Activated CD4-positive, alpha-beta memory T cell treated with anti-CD3 and anti-CD28 coated beads for 36 hours (primary cell): ENCODE measurements at regions of chr6 and their contacts with region 1.

Region 1: GRCh38 chr6:39228992-39229767 is at the start of gene KCNK5:
- DNase-seq: peak; percentile 93
- H3K4me3 Mint-ChIP-seq: peak within 1 kb of the TSS; percentile 78
- H3K27ac Mint-ChIP-seq: peak within 1 kb of the TSS; percentile 88
- H3K4me1 Mint-ChIP-seq: peaks cover 39% of the 10 kb centered on the region
- H3K27me3 Mint-ChIP-seq: no peaks in the 10 kb centered on the region
- total RNA-seq, gene KCNK5: 16.2 to 16.5 TPM

Region 2: GRCh38 chr6:37499433-37500293 is 1729.5 kb before region 1 on chr6 and contains the start of gene CCDC167:
- CTCF ChIA-PET with region 1: no interaction called
- POLR2A ChIA-PET with region 1: no interaction called
- intact Hi-C with region 1: loop called (anchors 5 kb)
- DNase-seq: peak; percentile 99
- H3K4me3 Mint-ChIP-seq: peak within 1 kb of the TSS; percentile 92
- H3K27ac Mint-ChIP-seq: peak within 1 kb of the TSS; percentile 95
- H3K4me1 Mint-ChIP-seq: peaks cover 86% of the 10 kb centered on the region
- H3K27me3 Mint-ChIP-seq: no peaks in the 10 kb centered on the region
- total RNA-seq, gene CCDC167: 60.4 to 65.2 TPM

Region 3: DNA sequence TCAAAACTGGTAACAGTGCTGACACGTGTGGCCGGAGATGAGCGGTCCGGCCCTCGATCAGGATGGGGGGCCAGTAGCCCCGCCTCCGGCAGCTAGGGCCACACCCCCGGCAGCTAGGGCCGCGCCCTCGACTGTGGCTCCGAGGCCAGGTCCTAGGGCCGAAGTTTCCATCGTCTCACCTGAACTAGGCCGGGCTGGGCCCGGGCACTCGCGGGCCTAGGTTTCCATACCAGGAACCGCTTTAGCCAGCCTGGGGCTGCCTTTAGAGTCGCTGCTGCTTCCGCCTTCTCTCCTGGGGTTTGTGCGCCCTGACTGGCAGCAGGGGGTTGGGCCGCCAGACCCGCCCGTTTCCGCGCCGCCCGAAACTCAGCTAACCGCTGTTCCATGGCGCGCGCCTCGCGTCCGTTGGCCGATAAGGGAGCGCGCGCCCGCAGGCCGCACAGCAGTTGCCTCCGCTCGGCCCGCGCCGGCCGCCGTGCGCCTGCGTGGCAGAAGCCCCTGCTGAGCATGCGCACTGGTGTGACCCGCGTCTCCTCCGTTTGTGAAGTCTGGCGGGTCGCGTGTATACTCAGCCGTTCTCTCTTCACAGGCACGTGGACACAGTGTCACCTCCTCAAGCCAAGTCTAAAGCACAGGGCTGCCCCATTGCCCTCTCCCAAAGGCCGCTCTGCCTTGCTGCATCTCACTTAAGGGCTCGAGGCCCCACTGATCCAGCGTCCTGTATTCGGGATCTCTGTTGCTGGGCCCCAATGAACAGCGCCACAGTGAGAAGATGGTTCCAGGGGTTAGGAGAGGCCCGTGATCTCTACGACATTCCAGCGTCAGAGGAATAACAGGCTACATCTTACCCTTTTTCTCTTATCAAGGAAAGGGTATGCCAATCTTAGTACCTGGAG is 114.2 kb before region 1 on chr6 and contains the start of gene SAYSD1:
- CTCF ChIA-PET with region 1: no interaction called
- POLR2A ChIA-PET with region 1: interaction called, 5 read pairs
- intact Hi-C with region 1: loop called (anchors 2 kb)
- DNase-seq: peak; percentile 95
- H3K4me3 Mint-ChIP-seq: peak within 1 kb of the TSS; percentile 95
- H3K27ac Mint-ChIP-seq: peak within 1 kb of the TSS; percentile 96
- H3K4me1 Mint-ChIP-seq: peaks cover 56% of the 10 kb centered on the region
- H3K27me3 Mint-ChIP-seq: no peaks in the 10 kb centered on the region
- total RNA-seq, gene SAYSD1: 12.3 to 12.9 TPM

Region 4: GRCh38 chr6:39166189-39166911 is 62.8 kb before region 1 on chr6:
- CTCF ChIA-PET with region 1: interaction called, 11 read pairs
- POLR2A ChIA-PET with region 1: no interaction called
- intact Hi-C with region 1: loop called (anchors 2 kb)
- DNase-seq: peak; percentile 90
- H3K4me3 Mint-ChIP-seq: no peak overlapping the region
- H3K27ac Mint-ChIP-seq: no peak overlapping the region
- H3K4me1 Mint-ChIP-seq: peaks cover 4% of the 10 kb centered on the region
- H3K27me3 Mint-ChIP-seq: no peaks in the 10 kb centered on the region

Region 5: DNA sequence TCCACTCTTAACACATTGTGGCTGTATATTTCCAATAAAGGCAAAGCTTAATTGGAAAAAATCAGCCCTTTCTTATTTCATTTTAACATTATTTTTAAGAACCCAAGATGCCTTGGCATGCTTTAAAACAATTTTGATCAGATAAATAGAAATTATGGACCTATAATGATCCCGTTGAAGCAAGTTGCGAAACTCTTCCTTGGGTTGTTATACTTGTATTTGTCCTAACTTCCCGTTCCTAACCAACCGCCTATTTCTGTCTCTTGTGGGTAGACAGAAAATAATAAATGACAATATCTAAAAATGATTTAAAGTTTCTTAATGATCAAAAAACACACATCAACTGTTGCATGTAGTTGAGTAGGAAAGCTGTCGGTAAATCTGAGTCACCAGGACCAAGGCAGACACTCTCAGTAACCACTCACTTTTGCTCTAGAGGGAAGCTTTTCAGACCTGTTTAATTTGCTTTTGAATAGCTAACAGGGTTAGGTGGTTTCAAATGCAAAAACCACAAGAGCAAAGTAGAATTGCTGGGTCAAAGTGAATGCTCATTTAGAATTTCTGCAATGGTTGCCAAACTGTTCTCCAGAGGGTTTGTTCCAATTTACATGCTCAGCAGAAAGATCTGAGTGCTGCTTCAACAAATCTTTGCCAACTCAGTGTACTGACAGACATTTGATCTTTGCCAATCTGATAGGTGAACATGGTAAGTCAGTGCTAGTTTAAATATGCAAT is 34.3 kb after region 1 on chr6:
- CTCF ChIA-PET with region 1: no interaction called
- POLR2A ChIA-PET with region 1: no interaction called
- intact Hi-C with region 1: loop called (anchors 2 kb)
- DNase-seq: peak; percentile 25
- H3K4me3 Mint-ChIP-seq: no peak overlapping the region
- H3K27ac Mint-ChIP-seq: no peak overlapping the region
- H3K4me1 Mint-ChIP-seq: peaks cover 7% of the 10 kb centered on the region
- H3K27me3 Mint-ChIP-seq: peaks cover 8% of the 10 kb centered on the region

Region 6: GRCh38 chr6:41072676-41073623 is 1843.8 kb after region 1 on chr6 and contains the start of gene NFYA:
- CTCF ChIA-PET with region 1: no interaction called
- POLR2A ChIA-PET with region 1: no interaction called
- intact Hi-C with region 1: loop called (anchors 5 kb)
- DNase-seq: peak; percentile 100
- H3K4me3 Mint-ChIP-seq: peak within 1 kb of the TSS; percentile 93
- H3K27ac Mint-ChIP-seq: peak within 1 kb of the TSS; percentile 98
- H3K4me1 Mint-ChIP-seq: peaks cover 52% of the 10 kb centered on the region
- H3K27me3 Mint-ChIP-seq: no peaks in the 10 kb centered on the region
- total RNA-seq, gene NFYA: 30.2 to 30.4 TPM